HAP-1 (cell line): ENCODE measurements at regions of chr7 and their contacts with region 1.

Region 1: DNA sequence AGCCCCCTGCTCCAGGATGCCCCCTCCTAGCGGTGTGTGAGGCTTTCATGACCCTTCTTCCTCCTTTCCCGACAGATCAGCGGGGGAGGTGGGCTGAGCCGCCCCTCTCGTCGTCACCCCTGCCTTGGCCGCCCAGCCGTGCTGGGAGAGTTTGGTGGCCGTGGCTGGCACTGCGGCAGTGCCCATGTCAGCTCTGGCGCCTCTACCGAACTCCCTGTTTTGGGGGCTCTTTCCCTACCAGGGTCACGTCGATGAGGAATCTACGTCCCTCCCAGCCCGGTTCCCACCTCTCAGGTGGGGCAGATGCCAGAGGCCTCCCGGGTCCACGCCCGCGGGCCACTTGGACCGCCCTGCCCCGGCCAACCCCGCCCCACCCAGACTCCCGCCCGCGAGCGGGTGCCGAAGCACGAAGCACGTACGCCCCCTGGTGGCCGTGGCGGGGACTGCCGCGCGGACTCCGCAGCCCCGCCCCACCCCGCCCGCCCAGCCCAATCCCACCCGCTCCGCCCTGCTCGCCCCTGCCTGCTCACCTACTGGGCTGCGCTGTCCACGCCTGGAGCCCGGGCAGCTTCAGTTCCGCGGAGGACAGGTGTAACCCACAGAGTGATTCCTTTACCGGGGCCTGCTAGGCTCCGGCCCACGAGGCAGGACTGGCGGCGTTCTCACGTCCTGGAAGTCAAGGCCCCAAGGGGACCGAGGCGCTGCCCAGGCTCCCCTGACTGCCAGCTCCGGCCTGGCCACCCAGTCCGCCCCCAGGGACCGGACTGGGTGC is 127.1 kb downstream of the UBE2H start:
- DNase-seq: peak; percentile 73 to 95
- H3K4me3 ChIP-seq: peak overlapping the region; percentile 52
- H3K4me1 ChIP-seq: peaks cover 22% of the 10 kb centered on the region
- H3K27me3 ChIP-seq: no peaks in the 10 kb centered on the region

Region 2: DNA sequence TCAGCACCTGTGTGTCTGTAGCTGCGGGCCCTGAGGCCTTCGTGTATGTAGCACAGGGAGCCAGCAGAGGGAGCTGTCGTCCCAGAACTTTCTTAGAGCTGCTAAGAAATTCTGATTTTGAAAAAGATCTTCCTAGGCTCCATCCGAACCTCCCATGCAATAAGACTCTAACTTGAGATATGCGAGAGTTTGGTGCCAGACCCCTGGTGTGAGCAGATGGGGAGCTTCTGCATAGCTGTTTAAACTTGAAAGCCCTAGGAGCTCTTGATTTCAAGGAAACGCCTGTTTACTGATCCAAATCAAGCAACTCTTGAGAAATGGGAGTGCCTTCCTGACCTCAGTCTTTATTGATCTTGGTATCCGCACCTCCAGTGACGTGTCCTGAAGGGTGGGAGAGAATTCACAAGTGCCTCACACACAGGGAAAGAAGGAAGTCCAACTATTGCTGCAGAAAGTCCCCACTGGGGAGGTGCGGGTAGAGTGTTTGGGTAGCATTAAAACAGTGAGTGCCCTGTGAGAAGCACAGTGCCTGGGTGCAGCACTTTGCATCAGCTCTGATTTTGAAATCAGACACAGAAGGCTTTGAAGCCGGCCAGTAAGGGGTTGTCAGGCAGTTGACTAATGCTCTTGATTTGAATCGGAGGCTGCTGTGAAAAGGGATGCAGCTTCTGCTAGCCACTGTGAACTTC is 457.8 kb before region 1 on chr7:
- in situ Hi-C with region 1: loop called (anchors 10 kb)
- DNase-seq: peak; percentile 60 to 84
- H3K4me3 ChIP-seq: no peak overlapping the region
- H3K4me1 ChIP-seq: peaks cover 10% of the 10 kb centered on the region
- H3K27me3 ChIP-seq: no peaks in the 10 kb centered on the region

Region 3: GRCh38 chr7:129468087-129468486 is 357.6 kb before region 1 on chr7:
- in situ Hi-C with region 1: no loop called
- DNase-seq: no peak
- H3K4me3 ChIP-seq: no peak overlapping the region
- H3K4me1 ChIP-seq: no peaks in the 10 kb centered on the region
- H3K27me3 ChIP-seq: no peaks in the 10 kb centered on the region

Region 4: GRCh38 chr7:129664029-129665012 is 161.4 kb before region 1 on chr7:
- in situ Hi-C with region 1: loop called (anchors 5 kb)
- DNase-seq: peak in 1 of 2 experiments; percentile 74
- H3K4me3 ChIP-seq: no peak overlapping the region
- H3K4me1 ChIP-seq: no peaks in the 10 kb centered on the region
- H3K27me3 ChIP-seq: no peaks in the 10 kb centered on the region